Sigmoid colon (tissue), 7 donors: ENCODE measurements at regions of chr5 and their contacts with region 1.

Region 1: DNA sequence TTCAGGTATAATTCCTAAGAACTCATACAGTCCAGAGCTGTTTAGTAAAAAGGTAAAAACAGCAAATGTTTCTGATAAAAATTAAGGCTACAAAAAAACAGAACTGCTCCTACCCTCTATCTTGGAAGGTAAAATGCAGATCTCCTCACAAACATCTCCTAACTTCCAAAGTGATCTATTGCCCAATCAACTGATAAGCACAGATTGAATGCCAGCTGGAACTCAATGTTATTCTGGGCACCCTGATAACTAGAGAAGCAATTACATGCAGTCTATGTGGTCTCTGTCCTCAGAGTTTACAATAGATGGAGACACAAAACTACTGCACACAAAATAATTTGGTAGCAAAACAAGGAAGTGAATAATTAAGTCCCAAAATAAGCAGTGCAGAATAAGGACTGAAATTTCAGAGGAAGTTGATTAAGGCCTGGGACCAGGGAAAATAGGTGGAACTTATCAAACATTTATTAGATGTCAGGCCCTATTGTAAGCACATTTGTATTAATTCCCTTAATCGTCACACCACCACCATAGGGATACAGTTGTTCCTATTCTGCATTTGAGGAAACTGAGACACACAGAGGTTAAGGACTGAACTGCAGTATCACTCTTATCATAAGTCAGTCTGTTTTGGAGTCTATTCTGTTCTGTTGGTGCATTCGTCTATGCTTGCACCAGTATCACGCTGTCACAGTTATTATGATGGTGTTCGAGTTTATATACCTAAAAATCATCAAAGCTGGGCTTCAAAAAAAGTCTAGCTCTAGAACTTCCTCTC is 102.2 kb upstream of the TARS1 start:
- DNase-seq: no peak
- H3K4me3 ChIP-seq: no peak overlapping the region
- H3K27ac ChIP-seq: peak overlapping the region in 3 of 4 donors; percentile 65 to 76 (median 69)
- H3K4me1 ChIP-seq: peaks cover 0 to 69% (median 42%) of the 10 kb centered on the region in 4 donors
- H3K27me3 ChIP-seq: no peaks in the 10 kb centered on the region
- CTCF ChIP-seq: no peak
- EP300 ChIP-seq: no peak
- POLR2A ChIP-seq: no peak

Region 2: GRCh38 chr5:33059081-33059480 is 279.4 kb before region 1 on chr5:
- intact Hi-C with region 1: no loop called
- DNase-seq: no peak
- H3K4me3 ChIP-seq: no peak overlapping the region
- H3K27ac ChIP-seq: no peak overlapping the region
- H3K4me1 ChIP-seq: no peaks in the 10 kb centered on the region
- H3K27me3 ChIP-seq: no peaks in the 10 kb centered on the region
- CTCF ChIP-seq: no peak
- EP300 ChIP-seq: no peak
- POLR2A ChIP-seq: no peak

Region 3: DNA sequence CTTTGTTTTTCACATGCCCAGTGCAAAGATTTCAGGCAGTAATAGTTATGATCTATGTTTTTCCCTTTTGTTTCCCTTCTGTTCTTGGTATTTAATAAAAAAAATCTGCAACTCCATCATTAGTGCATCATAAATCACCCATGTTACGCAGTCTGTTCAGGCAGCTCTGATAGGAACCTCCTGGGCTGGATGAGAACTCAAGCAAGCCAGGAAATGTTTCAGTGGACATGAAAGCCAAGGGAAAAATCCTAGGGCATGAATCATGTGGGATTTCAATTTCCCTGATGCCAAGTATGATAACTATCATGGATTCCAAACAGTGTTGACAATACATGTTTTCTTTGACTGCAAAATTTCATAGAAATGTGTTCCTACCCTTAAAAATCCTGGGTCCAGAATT is 17.5 kb before region 1 on chr5:
- intact Hi-C with region 1: loop called (anchors 2 kb)
- DNase-seq: peak; percentile 87
- H3K4me3 ChIP-seq: no peak overlapping the region
- H3K27ac ChIP-seq: peak overlapping the region; percentile 55 to 77 (median 72)
- H3K4me1 ChIP-seq: peaks cover 0 to 50% (median 37%) of the 10 kb centered on the region in 4 donors
- H3K27me3 ChIP-seq: no peaks in the 10 kb centered on the region
- CTCF ChIP-seq: no peak
- EP300 ChIP-seq: peak in 2 of 4 donors; percentile 19 to 56
- POLR2A ChIP-seq: no peak

Region 4: GRCh38 chr5:33369485-33370472 is 31.3 kb after region 1 on chr5:
- intact Hi-C with region 1: loop called (anchors 2 kb)
- DNase-seq: peak; percentile 71
- H3K4me3 ChIP-seq: no peak overlapping the region
- H3K27ac ChIP-seq: peak overlapping the region in 3 of 4 donors; percentile 70 to 82 (median 72)
- H3K4me1 ChIP-seq: peaks cover 0 to 24% (median 12%) of the 10 kb centered on the region in 4 donors
- H3K27me3 ChIP-seq: no peaks in the 10 kb centered on the region
- CTCF ChIP-seq: no peak
- EP300 ChIP-seq: peak; percentile 52 to 87 (median 62)
- POLR2A ChIP-seq: no peak

Region 5: GRCh38 chr5:33921002-33921401 is 582.5 kb after region 1 on chr5:
- intact Hi-C with region 1: no loop called
- DNase-seq: no peak
- H3K4me3 ChIP-seq: no peak overlapping the region
- H3K27ac ChIP-seq: no peak overlapping the region
- H3K4me1 ChIP-seq: no peaks in the 10 kb centered on the region
- H3K27me3 ChIP-seq: no peaks in the 10 kb centered on the region
- CTCF ChIP-seq: no peak
- EP300 ChIP-seq: no peak
- POLR2A ChIP-seq: no peak